ENCODE measurements at regions of chr19 and their contacts with region 1.

Region 1: GRCh38 chr19:10251792-10252694 is at the start of gene MRPL4:
- DNase-seq: peak; percentile 99
- ATAC-seq: peak; percentile 94
- H3K4me3 ChIP-seq: peak within 1 kb of the TSS; percentile 79 to 96 (median 92)
- H3K4me3 Mint-ChIP-seq: peak within 1 kb of the TSS; percentile 97
- H3K27ac ChIP-seq: peak within 1 kb of the TSS; percentile 48 to 79
- H3K27ac Mint-ChIP-seq: peak within 1 kb of the TSS; percentile 97
- H3K4me1 ChIP-seq: peaks cover 6 to 13% of the 10 kb centered on the region in 2 donors
- H3K4me1 Mint-ChIP-seq: peaks cover 24% of the 10 kb centered on the region
- H3K27me3 ChIP-seq: no peaks in the 10 kb centered on the region
- H3K27me3 Mint-ChIP-seq: no peaks in the 10 kb centered on the region
- CTCF ChIP-seq: no peak
- total RNA-seq, gene MRPL4: 39.8 and 40.1 TPM in 2 replicates

Region 2: DNA sequence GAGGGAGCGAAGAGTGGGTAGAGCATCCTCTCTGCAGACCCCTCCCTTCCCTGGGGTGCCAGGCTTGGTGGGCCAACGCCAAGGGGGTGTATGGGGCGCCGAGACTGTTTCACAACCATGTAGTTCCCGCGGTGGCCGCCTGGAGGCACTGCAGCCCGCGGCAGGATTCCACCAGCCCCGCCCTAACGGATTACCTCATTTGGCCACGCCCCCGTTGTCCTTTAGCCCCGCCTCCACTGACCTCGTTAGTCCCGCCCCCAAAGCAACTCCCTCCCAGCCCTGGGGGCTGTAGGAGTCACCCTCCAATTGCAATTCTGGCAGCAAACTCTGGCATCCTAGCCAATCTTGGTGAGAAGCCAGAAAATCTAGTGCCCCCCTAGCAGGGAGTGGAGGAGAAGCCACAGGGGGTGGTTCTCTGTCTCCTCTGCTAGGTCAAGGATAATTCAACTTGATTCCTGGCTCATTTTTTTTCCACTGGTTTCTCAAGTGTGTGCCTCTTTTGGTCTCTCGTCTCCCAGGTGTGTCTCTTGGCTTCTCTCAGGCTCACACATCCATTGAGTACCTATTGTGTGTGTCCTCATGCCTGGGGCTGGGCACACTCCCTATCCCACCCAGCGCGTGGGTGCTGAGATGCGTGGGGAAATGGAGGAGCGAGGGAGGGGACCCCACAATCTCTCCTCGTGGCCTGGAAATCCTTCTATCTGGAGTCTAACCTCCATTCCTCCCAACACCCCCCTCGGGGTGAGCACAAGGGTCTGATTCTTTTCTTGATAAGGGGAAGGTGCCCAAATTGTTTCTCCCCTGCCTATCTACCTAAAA is 317.7 kb before region 1 on chr19:
- CTCF ChIA-PET with region 1: interaction called, 30 read pairs
- POLR2A ChIA-PET with region 1: no interaction called
- intact Hi-C with region 1: loop called (anchors 1 kb)
- DNase-seq: peak; percentile 84
- ATAC-seq: peak; percentile 82
- H3K4me3 ChIP-seq: no peak overlapping the region
- H3K4me3 Mint-ChIP-seq: no peak overlapping the region
- H3K27ac ChIP-seq: no peak overlapping the region
- H3K27ac Mint-ChIP-seq: no peak overlapping the region
- H3K4me1 ChIP-seq: peaks cover 22 to 30% of the 10 kb centered on the region in 2 donors
- H3K4me1 Mint-ChIP-seq: peaks cover 26% of the 10 kb centered on the region
- H3K27me3 ChIP-seq: peaks cover 0 to 60% (median 34%) of the 10 kb centered on the region in 4 experiments
- H3K27me3 Mint-ChIP-seq: peaks cover 51% of the 10 kb centered on the region
- CTCF ChIP-seq: peak; percentile 89

Region 3: DNA sequence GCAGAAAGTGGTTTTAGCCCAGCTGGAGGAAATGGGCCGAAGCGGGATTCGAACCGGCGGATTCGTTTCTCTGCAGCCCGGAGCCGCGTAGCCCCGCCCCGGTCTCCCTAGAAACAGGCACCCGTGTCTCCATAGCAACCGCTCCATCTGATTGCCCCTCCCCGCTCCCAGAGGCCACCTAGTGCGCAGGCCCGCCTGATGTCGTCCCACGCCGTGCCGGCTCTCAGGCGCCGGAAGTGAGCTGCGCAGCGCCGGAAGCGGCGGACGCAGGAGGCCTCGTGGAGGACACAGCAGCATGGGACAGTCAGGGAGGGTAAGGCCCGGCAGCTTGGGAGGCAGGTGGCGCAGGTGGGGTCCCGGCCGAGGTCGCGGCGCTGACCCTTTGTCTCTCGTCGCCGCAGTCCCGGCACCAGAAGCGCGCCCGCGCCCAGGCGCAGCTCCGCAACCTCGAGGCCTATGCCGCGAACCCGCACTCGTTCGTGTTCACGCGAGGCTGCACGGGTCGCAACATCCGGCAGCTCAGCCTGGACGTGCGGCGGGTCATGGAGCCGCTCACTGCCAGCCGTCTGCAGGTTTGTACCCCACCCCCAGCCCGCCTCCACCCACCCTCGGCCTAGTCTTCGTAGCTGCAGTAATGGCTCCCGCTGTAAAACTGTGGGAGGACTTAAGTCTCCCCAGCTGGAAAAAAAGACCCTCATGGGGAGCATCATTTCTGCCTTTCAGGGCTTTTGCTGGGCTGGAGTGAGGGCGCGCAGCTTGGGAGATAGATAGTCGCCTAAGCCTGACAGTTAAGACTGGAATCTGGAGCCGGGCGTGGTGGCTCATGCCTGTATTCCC is 145.7 kb before region 1 on chr19 and contains the start of gene PPAN:
- CTCF ChIA-PET with region 1: interaction called, 16 read pairs
- POLR2A ChIA-PET with region 1: interaction called, 3 read pairs
- intact Hi-C with region 1: no loop called
- DNase-seq: peak; percentile 98
- ATAC-seq: peak; percentile 60
- H3K4me3 ChIP-seq: peak within 1 kb of the TSS; percentile 4 to 71 (median 69)
- H3K4me3 Mint-ChIP-seq: peak within 1 kb of the TSS; percentile 92
- H3K27ac ChIP-seq: peak within 1 kb of the TSS; percentile 97 to 99
- H3K27ac Mint-ChIP-seq: peak within 1 kb of the TSS; percentile 99
- H3K4me1 ChIP-seq: peaks cover 53 to 73% of the 10 kb centered on the region in 2 donors
- H3K4me1 Mint-ChIP-seq: peaks cover 58% of the 10 kb centered on the region
- H3K27me3 ChIP-seq: no peaks in the 10 kb centered on the region
- H3K27me3 Mint-ChIP-seq: no peaks in the 10 kb centered on the region
- CTCF ChIP-seq: no peak
- total RNA-seq, gene PPAN: 80.5 and 88.0 TPM in 2 replicates

Region 4: GRCh38 chr19:10120538-10121189 is 131.4 kb before region 1 on chr19:
- CTCF ChIA-PET with region 1: interaction called, 16 read pairs
- POLR2A ChIA-PET with region 1: no interaction called
- intact Hi-C with region 1: loop called (anchors 1 kb)
- DNase-seq: no peak
- ATAC-seq: no peak
- H3K4me3 ChIP-seq: no peak overlapping the region
- H3K4me3 Mint-ChIP-seq: peak overlapping the region; percentile 37
- H3K27ac ChIP-seq: no peak overlapping the region
- H3K27ac Mint-ChIP-seq: no peak overlapping the region
- H3K4me1 ChIP-seq: peaks cover 9 to 19% of the 10 kb centered on the region in 2 donors
- H3K4me1 Mint-ChIP-seq: peaks cover 31% of the 10 kb centered on the region
- H3K27me3 ChIP-seq: no peaks in the 10 kb centered on the region
- H3K27me3 Mint-ChIP-seq: no peaks in the 10 kb centered on the region
- CTCF ChIP-seq: no peak

Region 5: DNA sequence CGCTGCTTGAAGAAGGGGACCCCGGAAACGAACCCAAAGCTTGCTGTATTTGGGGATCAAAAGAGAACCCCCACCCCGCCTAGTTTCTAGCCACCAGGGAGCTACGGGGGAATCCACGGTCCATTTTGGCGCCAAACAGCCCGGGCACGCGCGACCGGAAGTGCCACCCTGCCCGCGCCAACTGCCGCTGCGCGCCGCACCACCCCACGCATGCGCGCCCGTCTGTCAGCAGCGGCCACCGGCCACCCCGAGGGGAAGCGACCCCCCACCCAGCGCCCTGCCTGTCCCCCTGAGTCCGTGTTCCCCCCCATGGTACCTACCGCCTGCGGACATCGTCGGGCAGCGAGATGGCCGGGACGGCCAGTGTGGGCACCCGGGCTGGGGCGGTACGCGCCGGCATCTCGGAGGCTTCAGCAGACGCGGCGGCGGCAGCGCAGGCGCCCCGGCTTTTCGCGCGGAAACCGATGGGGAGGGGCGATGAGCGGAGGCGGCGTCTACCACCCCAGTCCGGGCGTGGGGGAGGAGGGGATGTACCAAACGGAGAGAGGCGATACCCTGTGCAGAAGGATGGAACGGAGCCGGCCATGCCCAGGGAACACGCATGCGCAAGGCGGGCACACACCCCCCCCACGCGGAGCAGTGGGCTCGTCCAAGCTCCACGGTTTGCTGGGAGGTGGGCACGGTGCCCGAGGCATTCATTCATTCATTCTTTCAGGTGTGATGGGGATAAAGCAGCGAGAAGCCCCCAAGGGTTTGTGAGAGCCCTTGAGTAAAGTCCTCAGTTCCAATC is 57.3 kb before region 1 on chr19 and contains the start of gene DNMT1:
- CTCF ChIA-PET with region 1: interaction called, 20 read pairs
- POLR2A ChIA-PET with region 1: interaction called, 8 read pairs
- intact Hi-C with region 1: loop called (anchors 1 kb)
- DNase-seq: peak; percentile 97
- ATAC-seq: peak; percentile 94
- H3K4me3 ChIP-seq: peak within 1 kb of the TSS; percentile 68 to 89 (median 84)
- H3K4me3 Mint-ChIP-seq: peak within 1 kb of the TSS; percentile 97
- H3K27ac ChIP-seq: peak within 1 kb of the TSS; percentile 57 to 78
- H3K27ac Mint-ChIP-seq: peak within 1 kb of the TSS; percentile 94
- H3K4me1 ChIP-seq: peaks cover 14 to 23% of the 10 kb centered on the region in 2 donors
- H3K4me1 Mint-ChIP-seq: peaks cover 35% of the 10 kb centered on the region
- H3K27me3 ChIP-seq: no peaks in the 10 kb centered on the region
- H3K27me3 Mint-ChIP-seq: no peaks in the 10 kb centered on the region
- CTCF ChIP-seq: no peak
- total RNA-seq, gene DNMT1: 108 and 119 TPM in 2 replicates

Region 6: GRCh38 chr19:10230861-10231611 is 21.0 kb before region 1 on chr19 and contains the start of gene S1PR2:
- CTCF ChIA-PET with region 1: interaction called, 236 read pairs
- POLR2A ChIA-PET with region 1: interaction called, 10 read pairs
- intact Hi-C with region 1: loop called (anchors 1 kb)
- DNase-seq: peak; percentile 93
- ATAC-seq: peak; percentile 29
- H3K4me3 ChIP-seq: peak within 1 kb of the TSS; percentile 11 to 97 (median 66)
- H3K4me3 Mint-ChIP-seq: peak within 1 kb of the TSS; percentile 83
- H3K27ac ChIP-seq: peak within 1 kb of the TSS in 1 of 2 donors; percentile 81
- H3K27ac Mint-ChIP-seq: peak within 1 kb of the TSS; percentile 73
- H3K4me1 ChIP-seq: peaks cover 28 to 57% of the 10 kb centered on the region in 2 donors
- H3K4me1 Mint-ChIP-seq: peaks cover 45% of the 10 kb centered on the region
- H3K27me3 ChIP-seq: no peaks in the 10 kb centered on the region
- H3K27me3 Mint-ChIP-seq: no peaks in the 10 kb centered on the region
- CTCF ChIP-seq: no peak
- total RNA-seq, gene S1PR2: 3.6 and 4.4 TPM in 2 replicates

Region 7: DNA sequence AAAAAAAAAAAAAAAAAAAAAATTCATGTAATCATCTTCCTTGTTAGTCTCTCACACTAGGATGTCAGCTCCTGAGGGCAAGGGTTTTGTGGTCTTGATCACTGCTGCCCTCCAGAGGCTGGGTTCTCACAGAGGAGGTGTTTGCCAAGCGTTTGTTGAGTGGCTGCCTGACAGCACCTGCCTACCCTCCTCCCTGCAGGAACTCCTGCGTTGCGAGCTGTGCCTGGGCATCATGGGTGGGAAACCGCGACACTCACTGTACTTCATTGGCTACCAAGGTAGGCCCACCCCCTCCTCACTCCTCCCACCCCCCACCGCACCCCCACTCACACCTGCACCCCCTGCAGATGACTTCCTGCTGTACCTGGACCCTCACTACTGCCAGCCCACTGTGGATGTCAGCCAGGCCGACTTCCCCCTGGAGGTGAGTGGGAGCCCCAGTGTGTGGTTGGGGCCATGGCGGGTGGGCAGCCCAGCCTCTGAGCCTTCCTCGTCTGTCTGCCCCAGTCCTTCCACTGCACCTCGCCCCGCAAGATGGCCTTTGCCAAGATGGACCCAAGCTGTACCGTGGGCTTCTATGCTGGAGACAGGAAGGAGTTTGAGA is 299.8 kb after region 1 on chr19:
- CTCF ChIA-PET with region 1: no interaction called
- POLR2A ChIA-PET with region 1: no interaction called
- intact Hi-C with region 1: no loop called
- DNase-seq: no peak
- ATAC-seq: no peak
- H3K4me3 ChIP-seq: no peak overlapping the region
- H3K4me3 Mint-ChIP-seq: no peak overlapping the region
- H3K27ac ChIP-seq: peak overlapping the region in 1 of 2 donors; percentile 81
- H3K27ac Mint-ChIP-seq: peak overlapping the region; percentile 78
- H3K4me1 ChIP-seq: peaks cover 37 to 44% of the 10 kb centered on the region in 2 donors
- H3K4me1 Mint-ChIP-seq: peaks cover 34% of the 10 kb centered on the region
- H3K27me3 ChIP-seq: no peaks in the 10 kb centered on the region
- H3K27me3 Mint-ChIP-seq: no peaks in the 10 kb centered on the region
- CTCF ChIP-seq: no peak

Measured in B cell (primary cell).